ENCODE measurements at regions of chr16 and their contacts with region 1.

Region 1: DNA sequence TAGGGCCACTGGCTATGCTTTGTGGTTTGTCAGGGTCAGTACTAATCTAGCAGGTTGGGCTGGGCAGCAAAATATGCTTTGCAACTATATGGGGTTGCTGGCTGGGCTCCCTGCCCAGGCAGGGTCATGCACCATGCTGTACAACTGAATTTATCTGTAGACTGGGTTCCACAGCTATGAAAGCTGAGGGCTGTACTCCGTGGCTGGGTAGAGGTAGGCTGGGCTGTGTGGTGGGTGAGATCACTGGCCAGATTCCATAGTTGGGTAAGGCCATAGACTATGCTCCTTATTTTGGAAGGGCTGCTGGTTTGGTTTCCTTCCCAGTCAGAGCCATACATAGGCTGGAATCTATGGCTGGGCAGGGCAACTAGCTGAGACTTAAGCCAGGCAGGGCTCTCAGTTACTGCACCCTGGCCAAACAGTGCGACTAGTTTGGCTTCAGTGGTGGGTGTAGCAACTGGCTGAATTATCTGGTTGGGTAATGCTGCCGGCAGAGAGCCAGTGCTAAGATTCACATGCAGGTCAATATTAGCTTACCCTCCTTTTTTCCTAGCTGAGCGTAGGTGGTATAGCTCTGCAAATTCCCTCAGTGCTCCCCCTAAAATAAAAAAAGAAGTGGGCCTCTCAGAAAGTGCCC is 769.1 kb upstream of the CDH8 start:
- DNase-seq: peak; percentile 82

Region 2: GRCh38 chr16:62644030-62644801 is 161.1 kb before region 1 on chr16:
- intact Hi-C with region 1: loop called (anchors 10 kb)
- DNase-seq: no peak

Region 3: DNA sequence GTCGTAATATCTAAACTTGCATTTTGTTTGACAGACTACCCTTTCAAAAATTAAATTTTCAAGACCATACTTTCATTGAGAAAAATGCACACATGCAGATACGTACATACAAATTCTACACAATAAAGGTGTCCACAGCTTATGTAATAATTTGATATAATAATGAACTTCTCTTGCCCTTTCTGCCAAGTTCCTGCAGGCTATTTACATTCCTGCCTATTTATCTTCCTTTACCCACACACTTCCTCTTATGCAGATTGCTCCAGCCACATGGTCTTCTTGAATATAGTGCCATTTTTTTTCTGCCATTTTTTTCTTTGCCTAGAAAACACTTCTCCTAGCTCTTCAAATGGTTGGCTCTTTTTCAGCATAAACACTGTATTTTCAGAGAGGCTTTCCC is 57.8 kb after region 1 on chr16:
- intact Hi-C with region 1: no loop called
- DNase-seq: no peak

Measured in cardiac septum (tissue), 1 donor.